ENCODE measurements at regions of chr12 and their contacts with region 1.

Region 1: DNA sequence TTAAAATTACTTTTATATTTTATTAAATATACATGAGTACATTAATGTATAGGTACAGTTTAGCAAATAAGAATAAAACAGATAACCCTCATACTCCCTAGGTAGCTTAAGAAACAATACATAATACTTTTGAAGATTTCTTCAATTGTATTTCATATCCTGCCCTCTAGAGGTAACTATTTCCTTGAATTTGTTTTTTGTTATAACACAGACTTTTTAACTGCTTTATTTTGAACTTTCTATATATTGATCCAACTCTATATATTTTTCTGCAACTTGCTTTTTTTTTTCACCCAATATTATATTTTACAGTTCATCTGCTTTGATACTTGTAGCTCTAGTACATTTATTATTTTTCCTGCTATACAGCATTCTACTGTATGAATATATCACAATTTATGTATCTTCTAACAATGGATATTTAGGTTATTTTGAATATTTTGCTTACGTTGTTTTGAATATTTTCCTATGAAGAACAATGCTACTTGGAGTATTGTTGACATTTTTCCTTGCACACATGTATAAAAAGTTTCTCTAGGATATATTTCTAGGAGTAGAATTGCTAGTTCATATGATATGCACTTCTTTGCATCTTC is 72.8 kb upstream of the ABCD2 start:
- DNase-seq: no peak
- ATAC-seq: no peak
- H3K4me3 Mint-ChIP-seq: no peak overlapping the region
- H3K27ac Mint-ChIP-seq: no peak overlapping the region
- H3K4me1 Mint-ChIP-seq: no peaks in the 10 kb centered on the region
- H3K27me3 Mint-ChIP-seq: no peaks in the 10 kb centered on the region

Region 2: DNA sequence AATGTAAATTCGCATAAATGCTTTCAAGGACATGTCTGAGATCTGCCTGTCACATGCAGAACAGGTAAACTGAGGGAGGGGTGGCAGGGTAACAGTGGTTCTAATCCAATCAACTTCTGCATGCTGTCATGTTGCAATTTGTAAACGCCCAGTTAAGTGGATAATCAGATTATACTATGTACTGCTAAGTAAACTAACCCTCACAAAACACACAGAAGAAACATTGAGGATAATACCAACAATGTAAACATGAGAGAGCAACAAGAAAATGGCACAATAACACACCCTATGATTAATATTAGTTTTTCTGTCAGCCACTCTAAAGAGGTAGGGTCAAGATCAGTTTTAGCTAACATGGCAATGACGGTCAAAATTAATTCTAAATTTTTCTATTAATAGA is 373.2 kb before region 1 on chr12:
- CTCF ChIA-PET with region 1: interaction called, 4 read pairs
- POLR2A ChIA-PET with region 1: no interaction called
- intact Hi-C with region 1: loop called (anchors 1 to 5 kb)
- DNase-seq: no peak
- ATAC-seq: no peak
- H3K4me3 Mint-ChIP-seq: no peak overlapping the region
- H3K27ac Mint-ChIP-seq: no peak overlapping the region
- H3K4me1 Mint-ChIP-seq: no peaks in the 10 kb centered on the region
- H3K27me3 Mint-ChIP-seq: no peaks in the 10 kb centered on the region

Region 3: DNA sequence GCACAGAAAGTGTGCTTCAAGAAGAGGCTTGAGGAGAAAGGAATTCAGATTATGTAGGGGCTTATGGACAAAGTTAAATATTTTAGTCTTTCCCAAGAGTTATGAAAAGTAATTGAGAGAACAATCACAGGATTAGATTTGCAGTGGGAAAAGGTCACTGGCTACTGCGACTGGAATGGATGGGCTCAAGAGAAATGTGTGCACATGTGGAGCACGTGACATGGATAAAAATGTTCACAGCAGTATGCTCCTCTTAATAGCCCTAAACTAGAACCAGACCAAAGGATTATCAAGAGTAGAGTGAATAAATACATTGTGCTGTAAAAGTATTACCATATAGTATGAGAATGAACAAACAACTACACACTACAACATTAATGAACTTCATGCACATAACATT is 150.9 kb before region 1 on chr12:
- CTCF ChIA-PET with region 1: no interaction called
- POLR2A ChIA-PET with region 1: no interaction called
- intact Hi-C with region 1: loop called in 1 of 2 experiments (anchors 5 kb)
- DNase-seq: no peak
- ATAC-seq: no peak
- H3K4me3 Mint-ChIP-seq: no peak overlapping the region
- H3K27ac Mint-ChIP-seq: no peak overlapping the region
- H3K4me1 Mint-ChIP-seq: no peaks in the 10 kb centered on the region
- H3K27me3 Mint-ChIP-seq: no peaks in the 10 kb centered on the region

Region 4: GRCh38 chr12:39587225-39587624 is 105.1 kb before region 1 on chr12:
- CTCF ChIA-PET with region 1: interaction called, 4 read pairs
- POLR2A ChIA-PET with region 1: no interaction called
- intact Hi-C with region 1: loop called (anchors 1 kb)
- DNase-seq: peak; percentile 21
- ATAC-seq: peak; percentile 60
- H3K4me3 Mint-ChIP-seq: no peak overlapping the region
- H3K27ac Mint-ChIP-seq: no peak overlapping the region
- H3K4me1 Mint-ChIP-seq: peaks cover 4% of the 10 kb centered on the region
- H3K27me3 Mint-ChIP-seq: no peaks in the 10 kb centered on the region

Region 5: GRCh38 chr12:39646963-39647362 is 45.4 kb before region 1 on chr12:
- CTCF ChIA-PET with region 1: no interaction called
- POLR2A ChIA-PET with region 1: no interaction called
- intact Hi-C with region 1: no loop called
- DNase-seq: no peak
- ATAC-seq: no peak
- H3K4me3 Mint-ChIP-seq: no peak overlapping the region
- H3K27ac Mint-ChIP-seq: no peak overlapping the region
- H3K4me1 Mint-ChIP-seq: peaks cover 8% of the 10 kb centered on the region
- H3K27me3 Mint-ChIP-seq: no peaks in the 10 kb centered on the region